Stomach (tissue), 19 donors: ENCODE measurements at regions of chr9 and their contacts with region 1.

Region 1: DNA sequence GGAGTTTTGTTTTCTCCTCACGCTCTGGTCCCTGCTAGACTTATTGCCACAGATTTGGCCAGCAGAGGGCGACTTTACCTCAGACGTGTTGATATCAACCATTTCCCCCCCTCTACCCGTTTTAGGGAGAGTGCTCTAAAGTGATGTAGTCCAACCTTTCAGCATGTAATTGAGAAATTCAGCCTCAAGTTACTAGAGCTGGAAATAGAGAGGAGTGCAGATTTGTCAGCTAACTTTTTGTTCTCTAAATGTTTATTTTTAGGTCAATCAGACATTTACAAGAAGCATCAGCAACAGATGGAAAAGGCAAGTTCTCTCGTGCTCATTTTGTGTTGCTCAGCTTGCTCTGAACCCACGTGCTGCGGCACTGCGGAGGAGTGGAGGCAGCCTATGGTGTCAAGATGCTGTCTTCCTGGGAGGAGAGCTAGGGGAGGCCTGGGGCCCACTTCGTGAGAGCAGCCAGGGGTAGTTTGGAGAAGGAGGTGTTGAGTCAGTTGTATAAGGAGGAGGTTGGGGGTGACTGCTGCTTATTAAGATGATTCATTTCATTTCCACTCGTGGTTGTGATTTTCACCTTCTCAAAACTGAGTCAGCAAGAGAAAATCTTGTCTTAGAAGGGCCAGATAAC is 53.6 kb downstream of the GPR107 start:
- DNase-seq: peak; percentile 87 to 93
- H3K4me3 ChIP-seq: no peak overlapping the region
- H3K27ac ChIP-seq: peak overlapping the region in 4 of 5 donors; percentile 7 to 70 (median 44)
- H3K4me1 ChIP-seq: peaks cover 0 to 9% (median 2%) of the 10 kb centered on the region in 4 donors
- H3K27me3 ChIP-seq: no peaks in the 10 kb centered on the region
- CTCF ChIP-seq: peak in 5 of 7 experiments; percentile 57 to 81 (median 75)
- EP300 ChIP-seq: no peak
- POLR2A ChIP-seq: no peak

Region 2: GRCh38 chr9:130234340-130235242 is 127.2 kb after region 1 on chr9:
- intact Hi-C with region 1: loop called (anchors 5 kb)
- DNase-seq: no peak
- H3K4me3 ChIP-seq: no peak overlapping the region
- H3K27ac ChIP-seq: peak overlapping the region in 3 of 5 donors; percentile 26 to 74 (median 47)
- H3K4me1 ChIP-seq: peaks cover 7 to 19% (median 13%) of the 10 kb centered on the region in 4 donors
- H3K27me3 ChIP-seq: no peaks in the 10 kb centered on the region
- CTCF ChIP-seq: no peak
- EP300 ChIP-seq: no peak
- POLR2A ChIP-seq: no peak

Region 3: GRCh38 chr9:130343445-130343918 is 236.1 kb after region 1 on chr9:
- intact Hi-C with region 1: loop called (anchors 10 kb)
- DNase-seq: peak in 1 of 2 donors; percentile 51
- H3K4me3 ChIP-seq: no peak overlapping the region
- H3K27ac ChIP-seq: no peak overlapping the region
- H3K4me1 ChIP-seq: peaks cover 0 to 5% (median 2%) of the 10 kb centered on the region in 4 donors
- H3K27me3 ChIP-seq: peaks cover 0 to 20% (median 0%) of the 10 kb centered on the region in 3 donors
- CTCF ChIP-seq: peak in 5 of 7 experiments; percentile 26 to 61 (median 53)
- EP300 ChIP-seq: no peak
- POLR2A ChIP-seq: no peak